ENCODE measurements at regions of chrX and their contacts with region 1.

Region 1: DNA sequence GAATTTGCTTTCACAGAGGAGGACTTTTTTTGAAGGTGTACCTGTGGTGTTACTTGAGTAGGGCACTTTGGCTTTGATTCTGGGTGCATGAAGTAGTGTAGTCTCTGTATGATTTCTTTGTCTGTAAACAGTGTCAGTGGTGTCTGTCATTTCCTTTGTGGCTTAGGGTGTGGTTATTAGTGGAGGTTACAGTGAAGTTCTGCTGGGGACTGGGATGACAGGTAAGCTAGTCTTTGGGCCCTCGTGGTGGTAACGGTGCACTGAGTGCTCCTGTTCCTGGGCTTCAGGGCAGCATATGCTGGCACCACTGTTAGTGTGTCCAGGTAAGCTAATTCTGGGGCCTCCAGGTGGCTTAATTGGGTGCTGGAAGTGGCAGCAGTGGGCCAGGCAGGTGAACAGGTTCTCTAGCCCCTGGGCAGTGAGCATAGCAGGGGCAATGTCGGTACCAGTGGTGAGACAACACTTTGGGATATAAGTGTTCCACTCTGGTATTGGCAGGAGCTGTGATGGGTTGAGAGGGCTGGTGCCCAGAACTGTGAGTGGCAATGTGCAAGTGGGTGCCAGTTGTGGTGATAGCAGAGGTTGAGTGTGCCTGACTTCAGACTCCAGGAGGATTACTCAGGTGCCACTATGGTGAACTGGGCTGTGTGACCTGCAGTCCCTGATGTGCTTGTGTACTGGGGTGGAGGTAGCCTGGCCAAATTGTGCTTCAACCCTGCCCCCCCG is 26.0 kb upstream of the VSIG1 start:
- DNase-seq: no peak
- ATAC-seq: no peak
- H3K4me3 ChIP-seq: no peak overlapping the region
- H3K27ac ChIP-seq: no peak overlapping the region
- H3K4me1 ChIP-seq: no peaks in the 10 kb centered on the region
- H3K27me3 ChIP-seq: no peaks in the 10 kb centered on the region
- CTCF ChIP-seq: no peak
- POLR2A ChIP-seq: no peak

Region 2: DNA sequence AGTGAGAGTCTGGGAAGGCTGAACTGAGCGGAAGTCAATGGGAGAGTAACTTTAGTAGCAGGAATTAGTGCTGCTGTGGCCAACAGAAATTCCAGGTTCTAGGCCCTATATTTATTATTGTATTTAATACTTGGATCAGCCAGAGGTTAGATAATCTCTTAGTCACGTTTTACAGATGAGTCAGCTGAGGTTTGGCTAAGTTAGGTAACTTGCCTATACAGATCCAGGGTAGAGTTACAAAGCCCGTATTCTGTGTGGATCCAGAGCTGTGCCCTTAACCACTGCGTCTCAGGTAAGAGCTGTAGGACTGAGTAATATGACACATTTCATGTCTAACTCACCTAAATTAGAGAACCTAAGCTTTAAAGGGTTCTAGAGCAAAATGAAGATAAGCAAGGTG is 52.1 kb after region 1 on chrX:
- intact Hi-C with region 1: loop called (anchors 5 kb)
- DNase-seq: no peak
- ATAC-seq: no peak
- H3K4me3 ChIP-seq: no peak overlapping the region
- H3K27ac ChIP-seq: no peak overlapping the region
- H3K4me1 ChIP-seq: no peaks in the 10 kb centered on the region
- H3K27me3 ChIP-seq: no peaks in the 10 kb centered on the region
- CTCF ChIP-seq: no peak
- POLR2A ChIP-seq: no peak

Measured in body of pancreas (tissue), 4 donors.